ENCODE measurements at regions of chr9 and their contacts with region 1.

Region 1: GRCh38 chr9:110638381-110638954 is 30.1 kb upstream of the MUSK start:
- DNase-seq: no peak
- H3K4me3 ChIP-seq: no peak overlapping the region
- H3K27ac ChIP-seq: no peak overlapping the region
- H3K4me1 ChIP-seq: no peaks in the 10 kb centered on the region
- H3K27me3 ChIP-seq: no peaks in the 10 kb centered on the region
- CTCF ChIP-seq: peak; percentile 41 to 51

Region 2: DNA sequence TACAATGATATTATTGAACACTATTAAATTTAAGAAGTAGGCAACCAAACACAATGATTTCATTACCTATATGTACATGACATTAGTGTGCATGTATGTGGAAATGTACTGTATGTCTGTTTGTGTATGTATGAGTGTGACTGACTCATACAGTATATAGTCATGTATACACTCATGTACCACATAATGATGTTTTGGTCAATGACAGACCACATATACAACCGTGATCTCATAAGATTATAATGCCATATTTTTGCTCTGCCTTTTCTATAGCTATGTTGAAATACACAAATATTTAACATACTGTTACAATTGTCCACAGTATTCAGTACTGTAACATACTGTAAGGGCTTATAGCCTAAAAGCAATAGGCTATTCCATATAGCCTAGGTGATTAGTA is 78.6 kb before region 1 on chr9:
- CTCF ChIA-PET with region 1: no interaction called
- dilution Hi-C with region 1: no loop called
- in situ Hi-C with region 1: no loop called
- intact Hi-C with region 1: no loop called
- DNase-seq: no peak
- H3K4me3 ChIP-seq: no peak overlapping the region
- H3K27ac ChIP-seq: no peak overlapping the region
- H3K4me1 ChIP-seq: peaks cover 3% of the 10 kb centered on the region
- H3K27me3 ChIP-seq: no peaks in the 10 kb centered on the region
- CTCF ChIP-seq: no peak

Region 3: GRCh38 chr9:111149016-111149759 is 510.7 kb after region 1 on chr9:
- CTCF ChIA-PET with region 1: interaction called, 3 read pairs
- dilution Hi-C with region 1: no loop called
- in situ Hi-C with region 1: no loop called
- intact Hi-C with region 1: loop called (anchors 10 kb)
- DNase-seq: no peak
- H3K4me3 ChIP-seq: no peak overlapping the region
- H3K27ac ChIP-seq: no peak overlapping the region
- H3K4me1 ChIP-seq: no peaks in the 10 kb centered on the region
- H3K27me3 ChIP-seq: no peaks in the 10 kb centered on the region
- CTCF ChIP-seq: peak in 1 of 2 donors; percentile 38

Region 4: GRCh38 chr9:111298731-111299598 is 660.5 kb after region 1 on chr9:
- CTCF ChIA-PET with region 1: interaction called, 4 read pairs
- dilution Hi-C with region 1: loop called (anchors 5 kb)
- in situ Hi-C with region 1: loop called (anchors 5 to 10 kb)
- intact Hi-C with region 1: loop called (anchors 1 kb)
- DNase-seq: peak; percentile 39
- H3K4me3 ChIP-seq: no peak overlapping the region
- H3K27ac ChIP-seq: no peak overlapping the region
- H3K4me1 ChIP-seq: no peaks in the 10 kb centered on the region
- H3K27me3 ChIP-seq: no peaks in the 10 kb centered on the region
- CTCF ChIP-seq: peak; percentile 62 to 68

Region 5: GRCh38 chr9:111399772-111400563 is 761.5 kb after region 1 on chr9:
- CTCF ChIA-PET with region 1: no interaction called
- dilution Hi-C with region 1: no loop called
- in situ Hi-C with region 1: no loop called
- intact Hi-C with region 1: loop called (anchors 10 kb)
- DNase-seq: peak; percentile 56
- H3K4me3 ChIP-seq: no peak overlapping the region
- H3K27ac ChIP-seq: no peak overlapping the region
- H3K4me1 ChIP-seq: no peaks in the 10 kb centered on the region
- H3K27me3 ChIP-seq: no peaks in the 10 kb centered on the region
- CTCF ChIP-seq: peak; percentile 59 to 88

Measured in mammary epithelial cell (primary cell).